ENCODE measurements at regions of chr20 and their contacts with region 1.

Region 1: DNA sequence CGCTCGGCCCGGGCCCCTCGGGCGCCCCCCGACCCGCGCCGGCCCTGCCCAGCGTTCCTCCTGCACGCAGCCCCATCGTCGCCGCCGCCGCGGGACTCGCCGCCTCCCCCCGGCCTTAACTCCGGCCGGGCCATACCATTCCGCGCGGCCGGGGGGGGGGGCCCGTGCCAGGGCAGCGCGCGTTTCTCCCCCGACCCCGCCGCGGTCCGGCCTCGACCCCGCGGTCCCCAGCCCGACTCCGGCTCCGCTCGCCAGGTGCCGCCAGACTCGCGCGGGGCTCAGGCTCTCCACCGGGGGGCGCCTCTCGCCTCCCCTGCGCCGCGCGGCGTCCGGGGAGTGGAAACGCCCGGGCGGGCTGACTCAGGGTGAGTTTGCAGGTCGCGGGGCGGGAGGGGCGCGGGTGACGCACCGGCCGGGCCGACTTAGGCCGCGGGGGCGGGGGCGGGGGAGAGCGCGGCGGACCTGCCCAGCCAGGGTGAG is at the start of gene SRXN1:
- DNase-seq: peak; percentile 67 to 95
- H3K4me3 ChIP-seq: peak within 1 kb of the TSS; percentile 61 to 84
- H3K27ac ChIP-seq: peak within 1 kb of the TSS; percentile 82 to 84
- H3K4me1 ChIP-seq: peaks cover 9% of the 10 kb centered on the region in 2 donors
- H3K27me3 ChIP-seq: no peaks in the 10 kb centered on the region
- CTCF ChIP-seq: peak in 2 of 3 experiments; percentile 37 to 53
- total RNA-seq, gene SRXN1: 28.8 TPM

Region 2: GRCh38 chr20:462199-462991 is 190.8 kb before region 1 on chr20 and contains the start of gene TBC1D20:
- intact Hi-C with region 1: loop called (anchors 5 kb)
- DNase-seq: peak; percentile 24 to 86
- H3K4me3 ChIP-seq: peak within 1 kb of the TSS; percentile 84 to 96
- H3K27ac ChIP-seq: peak within 1 kb of the TSS; percentile 87 to 96
- H3K4me1 ChIP-seq: peaks cover 0 to 16% of the 10 kb centered on the region in 2 donors
- H3K27me3 ChIP-seq: no peaks in the 10 kb centered on the region
- CTCF ChIP-seq: peak in 2 of 3 experiments; percentile 27 to 30
- total RNA-seq, gene TBC1D20: 32.5 TPM

Region 3: GRCh38 chr20:548906-549305 is 104.2 kb before region 1 on chr20:
- intact Hi-C with region 1: no loop called
- DNase-seq: no peak
- H3K4me3 ChIP-seq: no peak overlapping the region
- H3K27ac ChIP-seq: no peak overlapping the region
- H3K4me1 ChIP-seq: peaks cover 0 to 3% of the 10 kb centered on the region in 2 donors
- H3K27me3 ChIP-seq: no peaks in the 10 kb centered on the region
- CTCF ChIP-seq: no peak

Region 4: DNA sequence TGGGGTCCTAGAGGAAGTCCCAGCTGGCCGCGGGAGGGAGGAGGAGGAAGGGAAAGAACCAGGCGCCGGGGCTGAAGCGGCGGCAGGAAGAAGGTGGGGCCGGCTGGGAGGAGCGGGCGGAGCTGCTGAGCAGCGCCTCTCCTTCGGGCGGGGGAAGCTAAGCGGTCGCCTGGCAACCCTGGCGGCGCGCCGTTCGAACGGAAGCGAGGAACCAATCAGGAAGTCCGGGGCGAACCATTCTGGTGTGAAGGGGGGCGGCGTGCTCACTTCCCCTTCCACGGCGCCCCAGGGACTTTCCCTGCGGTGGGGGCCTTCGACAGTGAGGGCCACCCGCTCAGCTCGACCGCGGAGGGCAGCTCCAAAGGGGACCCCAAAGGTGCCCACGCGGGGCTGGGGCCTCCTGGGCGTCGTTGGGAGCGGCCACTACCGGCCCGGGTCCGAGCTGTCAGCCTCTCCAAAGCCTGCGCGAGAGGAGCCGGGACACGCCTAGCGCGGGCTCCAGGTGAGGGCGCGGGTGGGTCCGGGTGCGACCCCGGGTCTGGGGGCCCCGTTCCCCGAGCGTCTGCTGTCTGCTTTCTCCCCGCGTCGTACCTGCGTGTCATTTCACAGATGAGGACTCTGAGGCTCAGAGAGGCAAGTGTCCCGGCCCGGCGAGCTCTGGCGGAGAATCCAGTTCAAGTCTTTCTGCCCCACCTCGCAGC is 180.4 kb after region 1 on chr20 and contains the start of gene FAM110A:
- intact Hi-C with region 1: loop called (anchors 2 kb)
- DNase-seq: peak; percentile 87 to 97
- H3K4me3 ChIP-seq: peak within 1 kb of the TSS; percentile 90
- H3K27ac ChIP-seq: peak within 1 kb of the TSS; percentile 72 to 78
- H3K4me1 ChIP-seq: peaks cover 4 to 17% of the 10 kb centered on the region in 2 donors
- H3K27me3 ChIP-seq: no peaks in the 10 kb centered on the region
- CTCF ChIP-seq: no peak
- total RNA-seq, gene FAM110A: 9.7 TPM

Region 5: DNA sequence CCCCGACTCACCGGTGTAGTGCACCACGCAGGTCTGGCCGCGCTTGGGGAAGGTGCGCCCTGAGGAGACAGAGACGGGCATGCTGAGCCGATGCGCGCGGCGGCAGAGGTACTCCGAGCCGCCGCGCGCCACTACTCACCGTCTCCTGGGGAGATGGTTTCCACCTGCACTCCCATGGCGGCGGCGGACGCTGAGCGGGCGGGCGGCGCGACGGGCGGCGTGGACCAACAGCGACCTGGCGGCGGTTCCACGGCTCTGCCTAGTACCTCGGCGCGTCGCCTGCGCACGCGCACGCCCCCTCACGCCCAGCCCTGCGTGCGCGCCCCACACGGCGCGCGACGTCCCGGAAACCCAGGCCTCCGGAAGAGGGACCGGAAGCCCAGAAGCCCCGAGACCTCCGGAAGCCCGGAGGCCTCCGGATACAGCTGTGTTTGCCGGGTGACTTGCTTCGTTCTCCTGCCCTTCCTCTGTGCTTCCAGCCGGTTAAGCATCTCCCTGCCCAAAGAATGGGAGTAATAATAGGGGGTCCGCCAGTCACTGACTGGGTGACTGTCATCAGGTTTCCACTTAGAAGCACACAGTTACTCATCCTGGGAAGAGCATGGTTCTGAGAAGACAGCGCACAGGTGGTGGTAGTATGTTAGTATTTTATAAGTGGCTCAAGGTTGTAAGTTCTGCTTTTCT is 739.8 kb after region 1 on chr20 and contains the start of gene FKBP1A:
- intact Hi-C with region 1: loop called (anchors 10 kb)
- DNase-seq: peak; percentile 51 to 94
- H3K4me3 ChIP-seq: peak within 1 kb of the TSS; percentile 80 to 92
- H3K27ac ChIP-seq: peak within 1 kb of the TSS; percentile 84 to 86
- H3K4me1 ChIP-seq: peaks cover 13 to 41% of the 10 kb centered on the region in 2 donors
- H3K27me3 ChIP-seq: no peaks in the 10 kb centered on the region
- CTCF ChIP-seq: peak in 2 of 3 experiments; percentile 13 to 19
- total RNA-seq, gene FKBP1A: 202 TPM

Measured in ascending aorta (tissue), 2 donors.